ENCODE measurements at regions of chr10 and their contacts with region 1.

Region 1: DNA sequence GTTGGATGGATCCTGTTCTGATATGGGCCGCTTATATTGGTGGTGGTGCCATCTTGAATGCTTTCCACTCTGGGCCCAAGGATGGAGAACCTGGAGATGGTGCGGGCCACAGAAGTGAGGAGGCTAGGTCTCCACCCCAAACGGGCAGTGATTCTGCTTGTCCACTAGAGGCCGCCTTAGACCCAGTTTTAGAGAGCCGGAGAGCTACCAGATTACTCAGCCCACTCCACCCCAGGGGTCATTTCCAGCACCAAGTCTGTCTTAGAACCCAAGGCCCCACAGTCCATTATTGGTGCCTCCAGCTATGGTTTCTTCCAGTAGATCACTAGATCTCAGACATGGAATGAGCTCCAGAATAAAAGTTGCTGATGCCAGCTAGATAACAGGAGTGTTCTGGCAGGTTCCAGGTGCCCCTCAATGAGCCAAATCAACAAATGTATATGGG is 11.8 kb upstream of the CAMK2G start:
- DNase-seq: peak; percentile 72
- H3K4me3 ChIP-seq: no peak overlapping the region
- H3K27ac ChIP-seq: peak overlapping the region; percentile 88
- H3K4me1 ChIP-seq: peaks cover 26% of the 10 kb centered on the region
- H3K27me3 ChIP-seq: no peaks in the 10 kb centered on the region
- CTCF ChIP-seq: peak; percentile 82 to 88
- POLR2A ChIP-seq: no peak

Region 2: DNA sequence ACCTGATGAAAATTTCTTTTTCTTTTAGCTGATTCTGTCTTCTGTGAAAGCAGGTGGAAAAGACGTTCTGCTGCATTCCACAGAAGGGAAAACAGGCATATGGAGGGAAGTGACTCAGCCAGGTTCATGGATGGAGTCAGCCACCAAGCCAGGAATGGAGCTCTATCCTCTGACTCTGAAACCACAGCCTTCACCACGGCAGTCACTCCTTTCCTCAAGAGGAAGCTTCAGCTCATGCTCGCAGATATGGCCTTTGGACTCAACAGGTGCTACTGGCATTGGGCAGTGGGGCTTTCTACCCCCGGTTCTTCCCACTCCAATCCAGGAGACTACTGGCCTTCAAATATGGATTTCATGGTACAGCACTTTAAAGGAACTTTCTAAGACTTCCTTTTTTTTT is 13.3 kb after region 1 on chr10:
- CTCF ChIA-PET with region 1: interaction called, 45 read pairs
- POLR2A ChIA-PET with region 1: interaction called, 13 read pairs
- dilution Hi-C with region 1: no loop called
- intact Hi-C with region 1: no loop called
- DNase-seq: peak; percentile 92
- H3K4me3 ChIP-seq: no peak overlapping the region
- H3K27ac ChIP-seq: peak overlapping the region; percentile 79
- H3K4me1 ChIP-seq: peaks cover 27% of the 10 kb centered on the region
- H3K27me3 ChIP-seq: no peaks in the 10 kb centered on the region
- CTCF ChIP-seq: no peak
- POLR2A ChIP-seq: no peak

Region 3: DNA sequence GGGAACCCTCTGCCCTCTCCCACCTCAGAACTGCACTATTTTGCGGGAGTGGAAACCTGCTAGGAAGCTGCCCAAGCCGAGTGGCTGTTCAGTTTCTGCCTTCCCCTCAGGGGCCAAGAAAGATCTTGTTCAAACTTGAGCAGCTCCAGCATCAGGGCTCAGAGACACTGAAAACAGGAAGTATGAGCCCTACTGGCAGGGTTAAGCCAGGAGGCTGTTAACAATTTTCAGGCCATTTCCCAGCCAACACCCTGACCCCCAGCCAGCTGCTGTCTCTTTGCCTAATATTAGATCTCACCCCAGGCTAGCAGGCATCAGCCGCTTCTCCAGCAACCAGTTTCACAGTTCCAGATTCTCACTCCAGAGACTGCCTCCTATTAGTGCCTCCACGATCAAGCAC is 34.0 kb after region 1 on chr10:
- CTCF ChIA-PET with region 1: interaction called, 43 read pairs
- POLR2A ChIA-PET with region 1: no interaction called
- dilution Hi-C with region 1: no loop called
- intact Hi-C with region 1: no loop called
- DNase-seq: no peak
- H3K4me3 ChIP-seq: no peak overlapping the region
- H3K27ac ChIP-seq: no peak overlapping the region
- H3K4me1 ChIP-seq: no peaks in the 10 kb centered on the region
- H3K27me3 ChIP-seq: no peaks in the 10 kb centered on the region
- CTCF ChIP-seq: no peak
- POLR2A ChIP-seq: no peak

Region 4: DNA sequence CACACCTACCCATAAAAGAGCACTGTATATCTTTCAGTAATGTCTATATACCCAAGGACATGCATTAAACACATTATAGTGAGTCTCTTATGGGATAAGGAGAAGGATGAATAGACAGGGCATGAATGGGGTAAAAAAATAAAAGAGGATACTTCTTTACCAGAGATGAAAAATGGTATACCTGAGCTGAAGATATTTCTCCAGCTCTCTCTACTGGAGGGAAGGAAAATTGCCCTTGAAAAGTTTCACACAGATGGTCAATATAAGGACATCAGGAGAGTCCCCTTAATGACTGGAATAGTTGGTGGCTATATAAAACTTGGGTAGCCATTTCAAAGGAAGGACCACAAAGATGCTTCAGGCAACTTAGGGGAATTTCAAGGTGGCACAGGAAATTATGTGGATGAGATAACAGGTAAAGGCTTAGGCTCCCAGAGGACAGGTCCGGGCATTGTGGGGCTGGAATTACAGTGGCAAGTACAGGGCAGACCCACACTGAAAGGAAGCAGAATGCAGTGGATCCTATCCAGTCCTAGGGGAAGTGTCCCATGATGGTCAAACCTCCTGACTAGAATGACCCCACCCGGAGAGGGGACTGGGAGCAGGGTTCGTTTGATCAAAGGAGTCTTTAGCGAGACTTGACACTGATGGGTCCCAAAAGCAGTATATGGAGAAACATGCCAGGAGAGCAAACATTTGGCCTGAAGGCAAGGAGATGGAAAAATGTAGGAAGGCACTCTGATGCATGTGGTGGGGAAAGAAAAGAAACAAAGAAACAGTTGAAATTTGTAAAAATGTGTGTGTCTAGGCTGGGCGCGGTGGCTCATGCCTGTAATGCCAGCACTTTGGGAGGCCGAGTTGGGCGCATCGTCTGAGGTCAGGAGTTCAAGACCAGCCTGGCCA is 60.4 kb after region 1 on chr10:
- CTCF ChIA-PET with region 1: interaction called, 439 read pairs
- POLR2A ChIA-PET with region 1: no interaction called
- dilution Hi-C with region 1: no loop called
- intact Hi-C with region 1: no loop called
- DNase-seq: no peak
- H3K4me3 ChIP-seq: no peak overlapping the region
- H3K27ac ChIP-seq: no peak overlapping the region
- H3K4me1 ChIP-seq: no peaks in the 10 kb centered on the region
- H3K27me3 ChIP-seq: no peaks in the 10 kb centered on the region
- CTCF ChIP-seq: no peak
- POLR2A ChIP-seq: no peak

Region 5: DNA sequence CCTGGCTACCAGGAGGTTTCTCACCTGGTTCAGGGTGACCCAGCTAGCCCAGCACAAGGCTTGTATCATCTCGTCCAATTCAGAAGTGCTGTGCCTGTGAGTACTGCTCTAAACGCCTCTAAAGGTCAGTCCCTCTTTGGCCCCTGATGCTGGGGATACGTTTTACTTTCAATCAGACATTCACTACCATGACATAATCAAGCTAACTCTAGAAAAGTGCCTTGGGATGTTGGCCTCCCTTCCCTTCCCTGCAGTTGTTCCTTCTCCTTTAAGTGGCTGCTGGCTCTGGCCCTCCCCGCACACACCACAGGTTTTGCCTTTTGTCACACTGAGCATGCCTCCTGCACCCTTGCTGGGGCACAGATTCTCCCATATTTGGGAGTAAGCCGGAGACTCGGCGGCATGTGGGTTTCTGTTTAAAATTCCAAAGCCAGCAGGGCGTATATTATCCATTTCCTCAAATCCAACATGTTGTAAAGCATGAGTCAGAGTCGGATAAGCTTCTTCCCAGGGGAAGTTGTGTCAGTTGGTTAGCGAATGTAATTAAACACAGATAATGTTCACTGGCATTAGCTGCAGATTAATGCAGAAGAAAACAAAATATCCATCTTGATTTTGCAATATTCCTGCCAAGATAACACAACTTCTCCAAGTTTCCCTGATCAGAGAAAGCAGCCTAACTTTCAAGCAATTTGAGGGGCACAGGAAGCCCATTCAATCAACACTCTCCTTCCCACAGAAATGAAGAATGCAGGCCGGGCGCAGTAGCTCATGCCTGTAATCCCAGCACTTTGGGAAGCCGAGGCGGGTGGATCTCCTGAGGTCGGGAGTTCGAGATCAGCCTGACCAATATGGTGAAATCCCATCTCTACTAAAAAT is 80.0 kb after region 1 on chr10:
- CTCF ChIA-PET with region 1: interaction called, 11 read pairs
- POLR2A ChIA-PET with region 1: interaction called, 3 read pairs
- dilution Hi-C with region 1: no loop called
- intact Hi-C with region 1: no loop called
- DNase-seq: peak; percentile 94
- H3K4me3 ChIP-seq: peak overlapping the region in 1 of 3 experiments; percentile 7
- H3K27ac ChIP-seq: peak overlapping the region; percentile 73
- H3K4me1 ChIP-seq: peaks cover 30% of the 10 kb centered on the region
- H3K27me3 ChIP-seq: no peaks in the 10 kb centered on the region
- CTCF ChIP-seq: no peak
- POLR2A ChIP-seq: no peak

Region 6: GRCh38 chr10:74021248-74022055 is 135.3 kb after region 1 on chr10:
- CTCF ChIA-PET with region 1: interaction called, 23 read pairs
- POLR2A ChIA-PET with region 1: interaction called, 3 read pairs
- dilution Hi-C with region 1: no loop called
- intact Hi-C with region 1: no loop called
- DNase-seq: peak; percentile 55
- H3K4me3 ChIP-seq: no peak overlapping the region
- H3K27ac ChIP-seq: peak overlapping the region; percentile 20
- H3K4me1 ChIP-seq: peaks cover 25% of the 10 kb centered on the region
- H3K27me3 ChIP-seq: no peaks in the 10 kb centered on the region
- CTCF ChIP-seq: no peak
- POLR2A ChIP-seq: no peak

Region 7: DNA sequence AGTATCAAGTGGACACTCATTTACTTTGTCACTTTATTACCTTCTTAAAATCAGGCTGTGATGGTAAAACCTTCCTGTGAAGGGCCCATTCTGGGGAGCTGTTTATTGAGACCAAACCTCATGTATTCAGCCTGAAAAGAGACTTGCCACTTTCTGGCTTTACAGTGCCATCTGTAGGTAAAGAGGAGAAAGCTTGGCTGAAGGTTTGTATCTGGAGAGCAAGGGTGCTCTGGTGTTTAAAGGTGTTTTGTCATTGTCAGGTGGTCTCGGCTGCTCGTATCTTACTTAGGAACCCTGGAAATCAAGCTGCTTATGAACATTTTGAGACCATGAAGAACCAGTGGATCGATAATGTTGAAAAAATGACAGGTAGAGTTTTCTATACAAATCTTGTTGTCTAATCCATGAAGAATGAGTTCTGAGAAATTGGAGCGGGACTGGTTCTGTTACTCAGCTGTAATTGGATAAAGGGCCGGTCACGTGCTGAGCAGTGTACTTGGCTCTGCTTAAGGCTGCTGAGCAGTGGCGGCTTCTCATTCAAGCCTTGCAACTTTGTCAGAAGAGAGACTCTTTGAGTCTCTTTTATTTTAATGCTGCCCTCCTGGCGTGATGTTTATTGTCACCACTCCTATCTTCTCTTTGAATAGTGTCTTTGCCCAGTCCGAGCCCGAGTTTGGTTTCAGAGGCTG is 217.6 kb after region 1 on chr10:
- CTCF ChIA-PET with region 1: interaction called, 34 read pairs
- POLR2A ChIA-PET with region 1: no interaction called
- dilution Hi-C with region 1: no loop called
- intact Hi-C with region 1: loop called (anchors 1 kb)
- DNase-seq: peak; percentile 37
- H3K4me3 ChIP-seq: no peak overlapping the region
- H3K27ac ChIP-seq: no peak overlapping the region
- H3K4me1 ChIP-seq: no peaks in the 10 kb centered on the region
- H3K27me3 ChIP-seq: no peaks in the 10 kb centered on the region
- CTCF ChIP-seq: peak; percentile 24 to 41
- POLR2A ChIP-seq: no peak

Measured in endothelial cell of umbilical vein (primary cell).